Naive thymus-derived CD4-positive, alpha-beta T cell (primary cell): ENCODE measurements at regions of chr20 and their contacts with region 1.

Region 1: GRCh38 chr20:1225783-1226654 is at the start of gene RAD21L1:
- DNase-seq: peak; percentile 55 to 83 (median 66)
- ATAC-seq: peak; percentile 96
- H3K4me3 ChIP-seq: peak within 1 kb of the TSS; percentile 76
- H3K4me3 Mint-ChIP-seq: peak within 1 kb of the TSS; percentile 82 to 92 (median 87)
- H3K27ac ChIP-seq: peak within 1 kb of the TSS; percentile 73
- H3K27ac Mint-ChIP-seq: peak within 1 kb of the TSS in 8 of 9 donors; percentile 34 to 90 (median 81)
- H3K4me1 ChIP-seq: peaks cover 8 to 12% of the 10 kb centered on the region in 2 donors
- H3K4me1 Mint-ChIP-seq: peaks cover 0 to 21% (median 14%) of the 10 kb centered on the region in 7 donors
- H3K27me3 ChIP-seq: peaks cover 0 to 11% of the 10 kb centered on the region in 2 donors
- H3K27me3 Mint-ChIP-seq: peaks cover 0 to 65% (median 16%) of the 10 kb centered on the region in 5 donors
- total RNA-seq, gene RAD21L1: 0.58 to 0.81 (median 0.64) TPM in 3 of 5 experiments, not detected in the others

Region 2: DNA sequence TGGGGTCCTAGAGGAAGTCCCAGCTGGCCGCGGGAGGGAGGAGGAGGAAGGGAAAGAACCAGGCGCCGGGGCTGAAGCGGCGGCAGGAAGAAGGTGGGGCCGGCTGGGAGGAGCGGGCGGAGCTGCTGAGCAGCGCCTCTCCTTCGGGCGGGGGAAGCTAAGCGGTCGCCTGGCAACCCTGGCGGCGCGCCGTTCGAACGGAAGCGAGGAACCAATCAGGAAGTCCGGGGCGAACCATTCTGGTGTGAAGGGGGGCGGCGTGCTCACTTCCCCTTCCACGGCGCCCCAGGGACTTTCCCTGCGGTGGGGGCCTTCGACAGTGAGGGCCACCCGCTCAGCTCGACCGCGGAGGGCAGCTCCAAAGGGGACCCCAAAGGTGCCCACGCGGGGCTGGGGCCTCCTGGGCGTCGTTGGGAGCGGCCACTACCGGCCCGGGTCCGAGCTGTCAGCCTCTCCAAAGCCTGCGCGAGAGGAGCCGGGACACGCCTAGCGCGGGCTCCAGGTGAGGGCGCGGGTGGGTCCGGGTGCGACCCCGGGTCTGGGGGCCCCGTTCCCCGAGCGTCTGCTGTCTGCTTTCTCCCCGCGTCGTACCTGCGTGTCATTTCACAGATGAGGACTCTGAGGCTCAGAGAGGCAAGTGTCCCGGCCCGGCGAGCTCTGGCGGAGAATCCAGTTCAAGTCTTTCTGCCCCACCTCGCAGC is 392.4 kb before region 1 on chr20 and contains the start of gene FAM110A:
- CTCF ChIA-PET with region 1: no interaction called
- POLR2A ChIA-PET with region 1: no interaction called
- intact Hi-C with region 1: loop called in 1 of 2 experiments (anchors 1 kb)
- DNase-seq: peak; percentile 87 to 95 (median 94)
- ATAC-seq: peak; percentile 94
- H3K4me3 ChIP-seq: peak within 1 kb of the TSS; percentile 88
- H3K4me3 Mint-ChIP-seq: peak within 1 kb of the TSS; percentile 73 to 92 (median 87)
- H3K27ac ChIP-seq: peak within 1 kb of the TSS; percentile 94
- H3K27ac Mint-ChIP-seq: peak within 1 kb of the TSS; percentile 60 to 97 (median 87)
- H3K4me1 ChIP-seq: peaks cover 24 to 27% of the 10 kb centered on the region in 2 donors
- H3K4me1 Mint-ChIP-seq: peaks cover 36 to 50% (median 46%) of the 10 kb centered on the region in 7 donors
- H3K27me3 ChIP-seq: no peaks in the 10 kb centered on the region
- H3K27me3 Mint-ChIP-seq: no peaks in the 10 kb centered on the region
- total RNA-seq, gene FAM110A: 10.9 to 47.4 (median 23.7) TPM

Region 3: DNA sequence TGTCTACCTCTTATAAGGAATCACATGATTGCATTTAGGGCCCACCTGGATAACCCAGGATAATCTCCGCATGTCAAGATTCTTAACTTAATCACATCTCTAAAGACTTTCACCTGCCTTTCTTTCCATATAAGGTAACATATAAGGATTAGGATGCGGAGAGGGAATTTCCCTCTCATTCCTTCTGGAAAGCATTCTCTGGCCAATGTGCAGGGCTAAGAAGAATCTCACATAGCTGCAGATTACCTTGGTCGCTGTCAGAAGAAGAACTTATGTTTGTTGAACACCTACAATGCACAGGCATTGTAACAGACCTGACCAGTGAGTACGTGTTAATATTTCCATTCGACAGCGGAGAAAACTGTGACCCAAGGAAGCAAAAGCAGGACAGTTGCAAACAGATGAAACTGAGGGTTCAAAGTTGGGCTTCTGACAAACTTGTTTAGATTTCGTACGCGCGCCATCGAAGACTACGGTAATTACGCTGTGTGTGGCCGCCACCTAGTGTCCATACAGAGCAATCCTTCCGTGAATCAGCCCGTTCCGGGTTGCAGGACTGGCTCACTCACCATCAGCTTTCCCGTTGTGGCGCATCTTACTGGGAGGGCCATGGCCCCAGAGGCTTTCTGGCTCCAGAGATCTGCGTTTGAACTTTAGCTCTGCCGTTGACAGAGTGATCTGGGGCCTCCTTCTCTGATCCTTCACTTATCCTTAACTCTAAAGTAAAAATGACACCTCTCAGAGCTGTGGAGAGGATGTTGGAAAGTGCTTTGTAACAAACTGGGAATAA is 13.2 kb before region 1 on chr20:
- CTCF ChIA-PET with region 1: interaction called, 4 read pairs
- POLR2A ChIA-PET with region 1: interaction called, 4 read pairs
- intact Hi-C with region 1: loop called (anchors 1 kb)
- DNase-seq: peak; percentile 40 to 72 (median 60)
- ATAC-seq: peak; percentile 94
- H3K4me3 ChIP-seq: no peak overlapping the region
- H3K4me3 Mint-ChIP-seq: peak overlapping the region in 4 of 10 donors; percentile 9 to 41 (median 36)
- H3K27ac ChIP-seq: no peak overlapping the region
- H3K27ac Mint-ChIP-seq: peak overlapping the region in 5 of 9 donors; percentile 0 to 97 (median 37)
- H3K4me1 ChIP-seq: peaks cover 5 to 27% of the 10 kb centered on the region in 2 donors
- H3K4me1 Mint-ChIP-seq: peaks cover 21 to 51% (median 36%) of the 10 kb centered on the region in 7 donors
- H3K27me3 ChIP-seq: no peaks in the 10 kb centered on the region
- H3K27me3 Mint-ChIP-seq: peaks cover 0 to 16% (median 0%) of the 10 kb centered on the region in 5 donors

Region 4: GRCh38 chr20:1299522-1299921 is 73.5 kb after region 1 on chr20:
- CTCF ChIA-PET with region 1: interaction called, 7 read pairs
- POLR2A ChIA-PET with region 1: no interaction called
- intact Hi-C with region 1: loop called (anchors 1 to 5 kb)
- DNase-seq: peak in 6 of 9 donors; percentile 12 to 39 (median 32)
- ATAC-seq: peak; percentile 64
- H3K4me3 ChIP-seq: no peak overlapping the region
- H3K4me3 Mint-ChIP-seq: peak overlapping the region in 7 of 10 donors; percentile 40 to 62 (median 58)
- H3K27ac ChIP-seq: peak overlapping the region; percentile 17
- H3K27ac Mint-ChIP-seq: peak overlapping the region; percentile 52 to 93 (median 75)
- H3K4me1 ChIP-seq: peaks cover 12 to 23% of the 10 kb centered on the region in 2 donors
- H3K4me1 Mint-ChIP-seq: peaks cover 20 to 36% (median 32%) of the 10 kb centered on the region in 7 donors
- H3K27me3 ChIP-seq: no peaks in the 10 kb centered on the region
- H3K27me3 Mint-ChIP-seq: no peaks in the 10 kb centered on the region

Region 5: GRCh38 chr20:1437235-1437904 is 211.4 kb after region 1 on chr20:
- CTCF ChIA-PET with region 1: no interaction called
- POLR2A ChIA-PET with region 1: no interaction called
- intact Hi-C with region 1: loop called in 1 of 2 experiments (anchors 2 kb)
- DNase-seq: peak; percentile 55 to 79 (median 72)
- ATAC-seq: peak; percentile 72
- H3K4me3 ChIP-seq: no peak overlapping the region
- H3K4me3 Mint-ChIP-seq: peak overlapping the region in 1 of 10 donors; percentile 35
- H3K27ac ChIP-seq: no peak overlapping the region
- H3K27ac Mint-ChIP-seq: peak overlapping the region in 3 of 9 donors; percentile 8 to 73 (median 16)
- H3K4me1 ChIP-seq: peaks cover 11 to 17% of the 10 kb centered on the region in 2 donors
- H3K4me1 Mint-ChIP-seq: peaks cover 25 to 53% (median 49%) of the 10 kb centered on the region in 7 donors
- H3K27me3 ChIP-seq: no peaks in the 10 kb centered on the region
- H3K27me3 Mint-ChIP-seq: peaks cover 0 to 19% (median 0%) of the 10 kb centered on the region in 5 donors